ENCODE measurements at regions of chr17 and their contacts with region 1.

Region 1: DNA sequence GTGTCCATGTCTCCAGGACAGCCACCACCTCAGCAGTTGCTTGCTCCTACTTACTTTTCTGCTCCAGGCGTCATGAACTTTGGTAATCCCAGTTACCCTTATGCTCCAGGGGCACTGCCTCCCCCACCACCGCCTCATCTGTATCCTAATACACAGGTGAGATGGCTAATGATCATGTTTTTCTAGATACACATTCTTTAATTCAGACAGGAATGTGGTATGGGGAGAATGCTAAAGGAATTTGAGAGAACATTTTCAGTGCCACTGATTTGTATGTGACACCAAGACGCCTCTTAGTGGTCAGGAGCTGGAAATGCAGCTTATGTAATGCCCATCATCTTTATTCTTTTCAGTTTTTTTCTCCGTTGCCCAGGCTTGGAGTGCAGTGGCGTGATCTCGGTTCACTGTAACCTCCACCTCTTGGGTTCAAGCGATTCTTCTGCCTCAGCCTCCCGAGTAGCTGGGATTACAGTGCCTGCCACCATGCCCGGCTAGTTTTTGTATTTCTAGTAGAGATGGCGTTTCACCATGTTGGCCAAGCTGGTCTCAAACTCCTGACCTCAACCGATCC is 8.9 kb upstream of the RAPGEFL1 start:
- H3K4me3 ChIP-seq: no peak overlapping the region
- H3K27ac ChIP-seq: peak overlapping the region; percentile 37; the same call in 1 of the 2 replicates
- H3K4me1 ChIP-seq: no peaks in the 10 kb centered on the region
- CTCF ChIP-seq: peak; percentile 52

Region 2: GRCh38 chr17:39769974-39770587 is 398.3 kb before region 1 on chr17:
- CTCF ChIA-PET with region 1: no interaction called
- POLR2A ChIA-PET with region 1: no interaction called
- H3K4me3 ChIP-seq: no peak overlapping the region
- H3K27ac ChIP-seq: peak overlapping the region; percentile 80
- H3K4me1 ChIP-seq: peaks cover 23% of the 10 kb centered on the region
- CTCF ChIP-seq: no peak

Region 3: DNA sequence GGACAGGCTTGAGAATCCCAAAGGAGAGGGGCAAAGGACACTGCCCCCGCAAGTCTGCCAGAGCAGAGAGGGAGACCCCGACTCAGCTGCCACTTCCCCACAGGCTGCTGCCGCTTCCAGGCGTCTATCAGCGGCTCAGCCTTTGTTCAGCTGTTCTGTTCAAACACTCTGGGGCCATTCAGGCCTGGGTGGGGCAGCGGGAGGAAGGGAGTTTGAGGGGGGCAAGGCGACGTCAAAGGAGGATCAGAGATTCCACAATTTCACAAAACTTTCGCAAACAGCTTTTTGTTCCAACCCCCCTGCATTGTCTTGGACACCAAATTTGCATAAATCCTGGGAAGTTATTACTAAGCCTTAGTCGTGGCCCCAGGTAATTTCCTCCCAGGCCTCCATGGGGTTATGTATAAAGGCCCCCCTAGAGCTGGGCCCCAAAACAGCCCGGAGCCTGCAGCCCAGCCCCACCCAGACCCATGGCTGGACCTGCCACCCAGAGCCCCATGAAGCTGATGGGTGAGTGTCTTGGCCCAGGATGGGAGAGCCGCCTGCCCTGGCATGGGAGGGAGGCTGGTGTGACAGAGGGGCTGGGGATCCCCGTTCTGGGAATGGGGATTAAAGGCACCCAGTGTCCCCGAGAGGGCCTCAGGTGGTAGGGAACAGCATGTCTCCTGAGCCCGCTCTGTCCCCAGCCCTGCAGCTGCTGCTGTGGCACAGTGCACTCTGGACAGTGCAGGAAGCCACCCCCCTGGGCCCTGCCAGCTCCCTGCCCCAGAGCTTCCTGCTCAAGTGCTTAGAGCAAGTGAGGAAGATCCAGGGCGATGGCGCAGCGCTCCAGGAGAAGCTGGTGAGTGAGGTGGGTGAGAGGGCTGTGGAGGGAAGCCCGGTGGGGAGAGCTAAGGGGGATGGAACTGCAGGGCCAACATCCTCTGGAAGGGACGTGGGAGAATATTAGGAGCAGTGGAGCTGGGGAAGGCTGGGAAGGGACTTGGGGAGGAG is 153.0 kb before region 1 on chr17 and contains the start of gene CSF3:
- CTCF ChIA-PET with region 1: interaction called, 27 read pairs
- POLR2A ChIA-PET with region 1: no interaction called
- H3K4me3 ChIP-seq: no peak within 1 kb of the TSS
- H3K27ac ChIP-seq: no peak within 1 kb of the TSS
- H3K4me1 ChIP-seq: no peaks in the 10 kb centered on the region
- CTCF ChIP-seq: no peak

Region 4: DNA sequence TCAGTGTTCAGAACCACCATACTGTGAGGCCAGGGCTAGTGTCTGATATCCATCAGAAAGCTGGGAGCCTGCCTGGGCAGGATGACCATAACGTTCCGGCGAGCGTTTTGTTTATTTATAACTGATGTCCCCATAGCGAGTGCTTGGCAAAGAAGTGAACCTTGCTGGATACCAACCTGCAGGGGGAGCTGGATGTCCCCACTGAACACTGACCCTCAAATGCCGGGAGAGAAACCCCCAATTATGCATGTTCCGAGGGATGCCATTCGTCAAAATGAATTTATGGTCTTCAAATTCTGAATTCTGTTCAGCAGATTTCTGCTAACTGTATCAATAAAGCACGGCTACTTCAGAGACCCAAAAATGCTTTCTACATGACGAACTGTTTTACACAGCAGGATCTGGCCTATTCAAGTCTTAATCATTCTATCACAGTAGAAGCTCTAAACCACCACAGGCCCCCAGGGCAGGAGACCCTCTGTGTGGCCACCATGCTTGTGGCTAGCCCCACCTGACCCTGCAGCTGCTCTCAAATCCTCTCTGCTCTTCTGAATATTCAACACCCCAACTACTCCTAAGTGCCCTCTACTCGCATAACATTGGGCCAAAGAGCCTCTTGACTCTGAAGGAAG is 129.3 kb before region 1 on chr17:
- CTCF ChIA-PET with region 1: interaction called, 17 read pairs
- POLR2A ChIA-PET with region 1: interaction called, 10 read pairs
- H3K4me3 ChIP-seq: no peak overlapping the region
- H3K27ac ChIP-seq: no peak overlapping the region
- H3K4me1 ChIP-seq: no peaks in the 10 kb centered on the region
- CTCF ChIP-seq: no peak

Region 5: GRCh38 chr17:40121181-40122135 is 46.9 kb before region 1 on chr17 and contains the start of gene MSL1:
- CTCF ChIA-PET with region 1: interaction called, 10 read pairs
- POLR2A ChIA-PET with region 1: interaction called, 5 read pairs
- H3K4me3 ChIP-seq: peak within 1 kb of the TSS; percentile 72
- H3K27ac ChIP-seq: peak within 1 kb of the TSS; percentile 95
- H3K4me1 ChIP-seq: no peaks in the 10 kb centered on the region; the same call in none of the 2 replicates
- CTCF ChIP-seq: no peak

Region 6: DNA sequence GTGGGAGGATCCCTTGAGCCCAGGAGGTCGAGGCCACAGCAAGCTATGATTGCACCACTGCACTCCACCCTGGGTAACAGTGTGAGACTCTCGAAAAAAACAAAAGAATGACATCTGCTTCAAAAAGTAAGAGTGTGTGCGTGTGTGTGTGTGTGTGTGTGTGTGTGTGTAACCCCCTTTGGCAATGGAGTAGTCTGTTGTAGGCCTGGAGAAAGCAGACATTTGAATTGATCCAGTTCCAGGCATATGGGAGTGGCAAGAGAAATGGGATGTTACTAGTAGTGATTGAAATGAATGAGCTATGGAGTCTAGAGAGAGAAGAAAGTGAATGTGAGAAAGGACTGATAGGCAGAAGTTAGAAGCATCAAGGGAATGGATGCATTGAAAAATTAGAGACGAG is 18.1 kb before region 1 on chr17:
- CTCF ChIA-PET with region 1: interaction called, 61 read pairs
- POLR2A ChIA-PET with region 1: interaction called, 3 read pairs
- H3K4me3 ChIP-seq: no peak overlapping the region
- H3K27ac ChIP-seq: no peak overlapping the region
- H3K4me1 ChIP-seq: no peaks in the 10 kb centered on the region
- CTCF ChIP-seq: no peak

Region 7: GRCh38 chr17:40191237-40192208 is 23.2 kb after region 1 on chr17:
- CTCF ChIA-PET with region 1: interaction called, 12 read pairs
- POLR2A ChIA-PET with region 1: interaction called, 4 read pairs
- H3K4me3 ChIP-seq: peak overlapping the region; percentile 50
- H3K27ac ChIP-seq: no peak overlapping the region
- H3K4me1 ChIP-seq: peaks cover 6% of the 10 kb centered on the region
- CTCF ChIP-seq: peak; percentile 90

Region 8: GRCh38 chr17:40230670-40231069 is 62.3 kb after region 1 on chr17:
- CTCF ChIA-PET with region 1: no interaction called
- POLR2A ChIA-PET with region 1: no interaction called
- H3K4me3 ChIP-seq: no peak overlapping the region
- H3K27ac ChIP-seq: no peak overlapping the region
- H3K4me1 ChIP-seq: no peaks in the 10 kb centered on the region
- CTCF ChIP-seq: no peak

Measured in HEK293 (cell line).